Activated CD8-positive, alpha-beta memory T cell treated with anti-CD3 and anti-CD28 coated beads, Interleukin-2, amount 10 ng/mL, durations not matched to agents 7 days and 5 days (primary cell): ENCODE measurements at regions of chr17 and their contacts with region 1.

Region 1: DNA sequence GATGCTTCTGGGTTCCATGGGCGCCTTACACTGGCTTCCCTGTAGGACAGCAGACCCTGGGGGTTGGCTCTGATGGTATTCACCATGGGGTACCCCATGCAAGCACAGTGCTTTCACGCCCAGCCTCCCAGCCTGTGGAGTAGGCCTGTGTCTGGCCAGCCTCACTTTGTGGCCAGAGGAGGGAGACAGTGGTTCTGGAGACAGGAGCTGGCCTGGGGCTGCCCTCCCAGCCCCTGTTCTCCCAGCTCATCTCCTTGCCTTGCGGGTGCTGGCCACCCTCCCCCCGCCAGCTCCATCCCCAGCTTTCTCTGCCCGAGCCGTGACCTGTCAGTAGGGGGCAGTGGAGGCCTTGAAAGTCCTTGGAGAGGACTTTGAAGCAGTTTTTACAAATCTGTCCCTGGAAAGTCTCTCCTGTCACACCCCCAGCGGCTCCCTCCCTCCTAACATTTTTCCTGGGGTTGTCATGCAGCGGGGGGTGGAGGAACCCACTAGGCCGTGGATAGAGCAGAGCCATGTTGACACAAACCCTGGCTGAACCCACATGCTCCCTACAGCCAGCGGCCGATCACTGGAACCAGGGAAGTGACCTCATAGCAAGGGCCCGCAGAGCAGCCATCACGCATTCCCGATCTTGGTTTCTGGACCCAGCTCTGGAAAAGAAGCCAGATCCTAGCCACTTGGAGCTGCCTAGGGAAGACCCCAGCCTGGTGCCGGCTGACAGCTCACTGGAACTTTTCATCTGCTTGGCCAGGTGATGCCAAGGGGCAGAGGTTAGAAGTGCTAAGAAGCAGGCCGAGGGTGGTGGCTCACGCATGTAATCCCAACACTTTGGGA is 289.4 kb downstream of the SEC14L1 start:
- DNase-seq: peak; percentile 89
- ATAC-seq: peak; percentile 50
- H3K4me3 Mint-ChIP-seq: no peak overlapping the region
- H3K27ac Mint-ChIP-seq: no peak overlapping the region
- H3K4me1 Mint-ChIP-seq: peaks cover 68% of the 10 kb centered on the region
- H3K27me3 Mint-ChIP-seq: no peaks in the 10 kb centered on the region

Region 2: DNA sequence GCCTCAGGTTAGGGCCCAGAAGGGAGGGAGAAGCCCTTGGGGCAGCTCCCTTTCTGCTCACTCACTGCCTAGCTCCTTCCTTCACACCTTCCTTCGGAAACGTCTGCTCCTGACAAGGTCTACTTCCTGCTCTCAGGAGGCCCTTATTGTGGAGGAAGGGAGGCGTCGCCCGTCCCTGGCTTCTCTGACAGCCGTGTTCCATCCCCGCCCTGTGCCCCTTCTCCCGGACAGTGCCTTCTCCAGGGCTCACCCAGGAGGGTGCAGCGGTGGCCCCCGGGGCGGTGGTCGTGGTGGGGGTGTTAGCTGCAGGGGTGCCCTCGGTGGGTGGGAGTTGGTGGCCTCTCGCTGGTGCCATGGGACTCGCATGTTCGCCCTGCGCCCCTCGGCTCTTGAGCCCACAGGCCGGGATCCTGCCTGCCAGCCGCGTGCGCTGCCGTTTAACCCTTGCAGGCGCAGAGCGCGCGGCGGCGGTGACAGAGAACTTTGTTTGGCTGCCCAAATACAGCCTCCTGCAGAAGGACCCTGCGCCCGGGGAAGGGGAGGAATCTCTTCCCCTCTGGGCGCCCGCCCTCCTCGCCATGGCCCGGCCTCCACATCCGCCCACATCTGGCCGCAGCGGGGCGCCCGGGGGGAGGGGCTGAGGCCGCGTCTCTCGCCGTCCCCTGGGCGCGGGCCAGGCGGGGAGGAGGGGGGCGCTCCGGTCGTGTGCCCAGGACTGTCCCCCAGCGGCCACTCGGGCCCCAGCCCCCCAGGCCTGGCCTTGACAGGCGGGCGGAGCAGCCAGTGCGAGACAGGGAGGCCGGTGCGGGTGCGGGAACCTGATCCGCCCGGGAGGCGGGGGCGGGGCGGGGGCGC is 57.5 kb before region 1 on chr17:
- CTCF ChIA-PET with region 1: interaction called, 11 read pairs
- DNase-seq: peak; percentile 82
- ATAC-seq: peak; percentile 57
- H3K4me3 Mint-ChIP-seq: peak overlapping the region; percentile 66
- H3K27ac Mint-ChIP-seq: peak overlapping the region; percentile 73
- H3K4me1 Mint-ChIP-seq: peaks cover 44% of the 10 kb centered on the region
- H3K27me3 Mint-ChIP-seq: no peaks in the 10 kb centered on the region

Region 3: DNA sequence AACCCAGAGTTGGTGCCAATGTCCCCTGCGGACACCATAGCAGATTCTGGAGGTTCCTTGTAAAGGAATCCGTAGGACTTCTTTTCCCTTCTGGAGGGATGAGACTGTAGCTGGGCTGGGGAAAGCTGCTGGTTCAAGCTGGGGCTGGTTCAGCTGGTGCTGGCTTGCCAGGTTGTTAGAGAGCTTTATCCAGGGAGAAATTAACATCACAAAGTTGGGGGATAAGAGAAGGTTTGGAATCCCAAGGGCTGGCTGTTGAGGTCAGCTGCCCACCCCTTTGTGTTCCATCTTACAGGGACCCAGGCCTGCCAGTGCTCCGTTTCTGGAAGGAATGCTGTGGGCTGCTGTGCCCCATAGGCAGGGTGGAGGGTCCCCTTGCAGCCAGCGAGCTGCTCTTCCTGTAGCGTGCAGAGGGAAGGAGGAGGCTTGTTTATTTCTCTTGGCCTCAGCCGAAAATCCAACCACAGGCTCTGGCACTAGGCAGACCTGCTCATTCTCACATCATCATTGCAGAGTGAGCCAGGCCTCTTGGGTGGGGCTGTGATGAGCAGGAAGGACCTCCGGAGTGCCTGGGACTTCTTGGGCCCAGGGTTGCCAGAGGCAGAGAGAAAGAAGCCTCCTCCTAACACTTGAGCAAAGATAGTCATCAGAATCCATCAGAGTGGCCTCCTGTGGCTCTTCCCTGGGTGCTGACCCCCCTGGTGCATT is 38.3 kb before region 1 on chr17:
- CTCF ChIA-PET with region 1: interaction called, 19 read pairs
- DNase-seq: peak; percentile 81
- ATAC-seq: peak; percentile 37
- H3K4me3 Mint-ChIP-seq: peak overlapping the region; percentile 42
- H3K27ac Mint-ChIP-seq: peak overlapping the region; percentile 82
- H3K4me1 Mint-ChIP-seq: peaks cover 72% of the 10 kb centered on the region
- H3K27me3 Mint-ChIP-seq: no peaks in the 10 kb centered on the region

Region 4: GRCh38 chr17:77444984-77445759 is 15.0 kb after region 1 on chr17:
- CTCF ChIA-PET with region 1: interaction called, 110 read pairs
- DNase-seq: peak; percentile 95
- ATAC-seq: peak; percentile 62
- H3K4me3 Mint-ChIP-seq: peak overlapping the region; percentile 73
- H3K27ac Mint-ChIP-seq: peak overlapping the region; percentile 93
- H3K4me1 Mint-ChIP-seq: peaks cover 93% of the 10 kb centered on the region
- H3K27me3 Mint-ChIP-seq: no peaks in the 10 kb centered on the region

Region 5: DNA sequence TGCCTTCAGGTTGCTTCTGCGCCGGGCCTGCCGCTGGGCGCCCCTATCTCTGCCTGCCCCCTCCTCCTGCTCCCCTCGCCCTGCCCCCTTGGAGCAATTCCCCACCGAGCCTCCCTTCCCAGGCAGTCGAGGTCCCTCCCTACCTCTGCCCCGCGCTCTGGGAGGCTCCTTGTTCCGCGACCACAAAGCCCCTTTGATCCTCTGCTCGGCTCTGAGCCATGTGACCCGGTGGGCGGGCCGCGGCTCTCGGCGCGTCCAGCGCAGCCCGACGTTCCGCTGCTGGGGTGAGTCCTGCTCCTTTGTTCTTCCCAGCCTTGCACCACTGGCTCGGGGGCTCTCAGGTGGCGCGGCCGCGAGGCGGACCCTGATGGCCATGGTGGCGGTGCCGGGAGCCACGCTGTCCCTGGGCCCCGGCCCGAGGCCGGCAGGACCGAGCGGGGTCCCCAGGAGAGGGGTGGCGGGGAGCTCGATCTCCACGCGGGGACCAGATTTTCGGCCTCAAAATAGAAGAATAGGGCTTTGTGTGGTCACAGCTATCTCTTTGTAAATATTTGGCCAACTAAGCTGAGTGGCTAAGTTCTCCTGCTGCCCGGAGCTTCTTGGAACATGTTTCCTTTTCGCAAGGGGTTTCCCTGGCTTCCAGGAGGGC is 21.2 kb after region 1 on chr17:
- CTCF ChIA-PET with region 1: interaction called, 110 read pairs
- DNase-seq: peak; percentile 76
- ATAC-seq: peak; percentile 54
- H3K4me3 Mint-ChIP-seq: peak overlapping the region; percentile 86
- H3K27ac Mint-ChIP-seq: peak overlapping the region; percentile 99
- H3K4me1 Mint-ChIP-seq: peaks cover 64% of the 10 kb centered on the region
- H3K27me3 Mint-ChIP-seq: no peaks in the 10 kb centered on the region

Region 6: GRCh38 chr17:77456951-77457548 is 26.9 kb after region 1 on chr17:
- CTCF ChIA-PET with region 1: interaction called, 98 read pairs
- DNase-seq: peak; percentile 70
- ATAC-seq: no peak
- H3K4me3 Mint-ChIP-seq: peak overlapping the region; percentile 86
- H3K27ac Mint-ChIP-seq: peak overlapping the region; percentile 99
- H3K4me1 Mint-ChIP-seq: peaks cover 79% of the 10 kb centered on the region
- H3K27me3 Mint-ChIP-seq: no peaks in the 10 kb centered on the region

Region 7: GRCh38 chr17:77494664-77495435 is 64.7 kb after region 1 on chr17:
- CTCF ChIA-PET with region 1: interaction called, 126 read pairs
- DNase-seq: peak; percentile 77
- ATAC-seq: peak; percentile 74
- H3K4me3 Mint-ChIP-seq: no peak overlapping the region
- H3K27ac Mint-ChIP-seq: peak overlapping the region; percentile 58
- H3K4me1 Mint-ChIP-seq: peaks cover 21% of the 10 kb centered on the region
- H3K27me3 Mint-ChIP-seq: no peaks in the 10 kb centered on the region